Activated B cell treated with CpG ODN at 0.5 μM for 24 hours (primary cell): ENCODE measurements at regions of chr13 and their contacts with region 1.

Region 1: GRCh38 chr13:45340926-45341750 is at the start of gene TPT1:
- DNase-seq: peak; percentile 99
- ATAC-seq: peak; percentile 89
- H3K4me3 Mint-ChIP-seq: peak within 1 kb of the TSS; percentile 99
- H3K27ac Mint-ChIP-seq: peak within 1 kb of the TSS; percentile 99
- H3K4me1 Mint-ChIP-seq: peaks cover 56% of the 10 kb centered on the region
- H3K27me3 Mint-ChIP-seq: no peaks in the 10 kb centered on the region
- CTCF ChIP-seq: no peak
- total RNA-seq, gene TPT1: 3,880 and 4,323 TPM in 2 replicates

Region 2: GRCh38 chr13:44435142-44435982 is 905.8 kb before region 1 on chr13:
- CTCF ChIA-PET with region 1: no interaction called
- POLR2A ChIA-PET with region 1: no interaction called
- intact Hi-C with region 1: loop called (anchors 1 kb)
- DNase-seq: peak; percentile 78
- ATAC-seq: peak; percentile 90
- H3K4me3 Mint-ChIP-seq: peak overlapping the region; percentile 85
- H3K27ac Mint-ChIP-seq: peak overlapping the region; percentile 69
- H3K4me1 Mint-ChIP-seq: peaks cover 28% of the 10 kb centered on the region
- H3K27me3 Mint-ChIP-seq: peaks cover 8% of the 10 kb centered on the region
- CTCF ChIP-seq: no peak

Region 3: GRCh38 chr13:45310341-45311125 is 30.6 kb before region 1 on chr13:
- CTCF ChIA-PET with region 1: no interaction called
- POLR2A ChIA-PET with region 1: no interaction called
- intact Hi-C with region 1: loop called (anchors 1 kb)
- DNase-seq: no peak
- ATAC-seq: no peak
- H3K4me3 Mint-ChIP-seq: peak overlapping the region; percentile 83
- H3K27ac Mint-ChIP-seq: no peak overlapping the region
- H3K4me1 Mint-ChIP-seq: peaks cover 18% of the 10 kb centered on the region
- H3K27me3 Mint-ChIP-seq: peaks cover 7% of the 10 kb centered on the region
- CTCF ChIP-seq: no peak

Region 4: GRCh38 chr13:45417790-45418534 is 76.8 kb after region 1 on chr13 and contains the start of gene SLC25A30:
- CTCF ChIA-PET with region 1: no interaction called
- POLR2A ChIA-PET with region 1: interaction called, 19 read pairs
- intact Hi-C with region 1: loop called (anchors 1 kb)
- DNase-seq: peak; percentile 87
- ATAC-seq: peak; percentile 96
- H3K4me3 Mint-ChIP-seq: peak within 1 kb of the TSS; percentile 95
- H3K27ac Mint-ChIP-seq: peak within 1 kb of the TSS; percentile 97
- H3K4me1 Mint-ChIP-seq: peaks cover 22% of the 10 kb centered on the region
- H3K27me3 Mint-ChIP-seq: no peaks in the 10 kb centered on the region
- CTCF ChIP-seq: no peak
- total RNA-seq, gene SLC25A30: 19.0 and 19.3 TPM in 2 replicates

Region 5: GRCh38 chr13:46160471-46161066 is 819.4 kb after region 1 on chr13:
- CTCF ChIA-PET with region 1: no interaction called
- POLR2A ChIA-PET with region 1: no interaction called
- intact Hi-C with region 1: loop called (anchors 10 kb)
- DNase-seq: no peak
- ATAC-seq: peak; percentile 45
- H3K4me3 Mint-ChIP-seq: peak overlapping the region; percentile 70
- H3K27ac Mint-ChIP-seq: peak overlapping the region; percentile 88
- H3K4me1 Mint-ChIP-seq: peaks cover 61% of the 10 kb centered on the region
- H3K27me3 Mint-ChIP-seq: no peaks in the 10 kb centered on the region
- CTCF ChIP-seq: no peak